Activated naive CD4-positive, alpha-beta T cell treated with anti-CD3 and anti-CD28 coated beads, Interleukin-2, amount 10 ng/mL, durations not matched to agents 7 days and 5 days (primary cell): ENCODE measurements at regions of chr5 and their contacts with region 1.

Region 1: DNA sequence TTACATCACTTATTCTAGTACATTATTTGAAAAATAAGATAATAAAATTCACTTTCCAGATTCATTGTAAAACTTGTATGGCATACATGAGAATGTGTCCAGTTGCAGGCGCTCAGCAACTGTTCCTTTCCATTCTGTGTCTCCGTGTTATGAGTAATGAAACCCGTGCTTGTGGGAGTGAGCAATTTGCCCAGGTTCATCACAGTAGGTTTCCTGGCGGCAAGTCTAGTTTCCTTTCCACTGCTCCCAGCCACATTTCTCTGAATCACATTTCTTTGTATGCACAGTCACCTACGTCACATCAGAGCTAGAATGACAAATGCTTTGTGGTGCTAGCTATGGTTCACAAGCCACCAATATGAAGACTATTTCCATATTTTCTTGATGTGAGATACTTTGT is 39.9 kb downstream of the MOCS2 start:
- DNase-seq: peak; percentile 72
- H3K4me3 Mint-ChIP-seq: no peak overlapping the region
- H3K27ac Mint-ChIP-seq: peak overlapping the region; percentile 46
- H3K4me1 Mint-ChIP-seq: peaks cover 27% of the 10 kb centered on the region
- H3K27me3 Mint-ChIP-seq: no peaks in the 10 kb centered on the region

Region 2: DNA sequence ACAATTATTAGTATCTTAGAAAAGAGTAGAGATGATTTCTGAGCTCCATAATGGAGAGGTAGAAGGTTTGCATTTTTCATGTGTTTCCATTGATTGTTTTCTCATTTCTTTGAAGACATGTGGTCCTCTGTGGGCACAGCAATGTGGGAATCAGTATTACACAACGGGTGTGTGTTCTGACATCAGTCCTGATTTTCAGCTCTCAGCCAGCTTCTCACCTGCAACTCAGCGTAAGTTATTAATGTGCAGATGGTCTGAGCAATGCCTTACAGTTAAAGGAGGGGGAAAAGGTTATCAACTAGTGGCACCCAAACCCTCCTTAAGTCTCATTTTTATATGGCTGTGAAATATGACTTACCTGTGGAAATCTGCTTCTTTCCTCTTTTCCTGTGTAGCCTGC is 21.4 kb before region 1 on chr5:
- CTCF ChIA-PET with region 1: no interaction called
- DNase-seq: no peak
- H3K4me3 Mint-ChIP-seq: no peak overlapping the region
- H3K27ac Mint-ChIP-seq: no peak overlapping the region
- H3K4me1 Mint-ChIP-seq: peaks cover 17% of the 10 kb centered on the region
- H3K27me3 Mint-ChIP-seq: no peaks in the 10 kb centered on the region

Region 3: DNA sequence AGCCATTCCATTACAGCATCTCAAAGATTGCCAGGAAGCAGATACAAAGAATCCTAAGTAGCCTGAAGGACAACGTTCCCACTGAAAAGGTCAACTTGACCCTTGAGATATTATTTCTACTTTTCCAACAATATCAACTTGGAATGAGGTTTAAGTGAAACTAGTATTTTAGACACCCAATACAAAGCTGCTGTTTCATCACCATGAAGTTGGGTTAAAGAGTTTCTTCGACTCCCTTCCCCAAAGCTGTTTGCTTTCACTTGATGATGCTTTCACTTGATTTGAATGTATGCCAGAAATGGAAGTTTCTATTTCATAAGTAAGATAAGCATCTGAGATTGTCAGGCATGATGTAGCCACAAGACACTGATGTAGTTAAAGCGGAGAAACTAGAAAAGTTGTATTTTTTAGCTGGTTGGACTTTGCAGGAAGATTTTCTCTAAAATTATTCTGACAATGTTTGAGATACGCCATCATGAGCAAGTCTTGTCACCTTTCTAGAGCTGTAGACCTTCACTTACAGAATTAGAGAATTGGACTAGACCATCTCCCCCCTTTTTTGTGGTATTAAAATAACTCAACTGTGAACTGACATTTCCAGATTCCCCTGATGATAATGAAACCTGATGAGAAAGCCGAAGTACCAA is 19.8 kb after region 1 on chr5:
- CTCF ChIA-PET with region 1: interaction called, 18 read pairs
- DNase-seq: no peak
- H3K4me3 Mint-ChIP-seq: peak overlapping the region; percentile 25
- H3K27ac Mint-ChIP-seq: peak overlapping the region; percentile 82
- H3K4me1 Mint-ChIP-seq: peaks cover 70% of the 10 kb centered on the region
- H3K27me3 Mint-ChIP-seq: no peaks in the 10 kb centered on the region